ENCODE measurements at regions of chr4 and their contacts with region 1.

Region 1: DNA sequence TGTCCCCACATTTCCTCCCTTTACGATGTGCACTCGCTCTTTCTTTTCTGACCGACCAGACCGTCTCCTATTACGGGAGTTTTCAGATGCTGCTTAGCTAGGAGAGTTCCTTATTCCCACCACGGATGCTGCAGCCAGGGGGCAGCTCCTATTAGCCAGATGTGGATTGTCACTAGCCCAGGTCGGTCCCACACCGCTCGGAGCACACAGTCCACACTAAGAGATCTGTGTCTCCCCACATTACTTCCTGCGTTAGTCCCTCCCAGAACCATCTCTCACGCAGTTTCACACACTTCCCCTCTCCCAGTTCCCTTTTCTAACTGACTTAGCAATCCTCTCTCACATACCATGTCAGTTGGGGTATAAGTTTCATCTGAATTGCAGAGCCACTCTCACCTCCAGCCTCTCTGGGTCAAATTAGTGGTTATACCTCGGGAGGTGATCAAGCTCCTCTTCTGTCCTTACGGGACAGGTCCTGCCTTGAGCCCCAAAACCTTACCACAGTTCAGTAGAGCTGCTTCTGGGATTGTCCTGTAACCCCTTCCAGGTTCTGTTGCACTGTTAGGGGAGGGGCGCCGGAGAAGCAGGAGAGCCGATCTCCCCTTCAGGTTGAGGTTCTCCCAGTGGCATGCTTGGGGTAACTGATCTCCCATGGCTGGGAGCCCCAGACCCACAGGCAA is 28.2 kb downstream of the SULT1E1 start:
- DNase-seq: no peak
- H3K4me3 Mint-ChIP-seq: peak overlapping the region; percentile 85
- H3K27ac Mint-ChIP-seq: peak overlapping the region; percentile 52
- H3K4me1 Mint-ChIP-seq: peaks cover 9% of the 10 kb centered on the region
- H3K27me3 Mint-ChIP-seq: no peaks in the 10 kb centered on the region

Region 2: DNA sequence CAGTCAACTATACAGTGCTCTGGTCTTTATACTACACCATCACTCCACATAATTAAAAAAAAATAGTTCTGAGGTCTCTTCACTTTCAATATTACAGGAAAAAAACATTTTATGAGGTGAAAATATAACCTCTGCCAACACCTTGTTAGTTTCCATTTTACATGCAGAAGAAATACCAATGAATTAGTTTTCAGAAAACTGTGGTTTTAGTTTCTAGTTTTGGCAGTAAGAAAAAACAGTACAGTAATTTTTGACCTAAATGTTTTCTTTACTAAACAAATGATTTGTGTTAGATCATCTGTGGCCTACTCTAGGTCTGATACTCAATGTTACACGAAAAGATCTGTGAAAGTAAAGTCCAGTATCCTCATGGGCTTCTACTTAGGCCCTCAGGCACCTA is 18.2 kb after region 1 on chr4:
- intact Hi-C with region 1: loop called (anchors 2 kb)
- DNase-seq: no peak
- H3K4me3 Mint-ChIP-seq: no peak overlapping the region
- H3K27ac Mint-ChIP-seq: no peak overlapping the region
- H3K4me1 Mint-ChIP-seq: no peaks in the 10 kb centered on the region
- H3K27me3 Mint-ChIP-seq: peaks cover 2% of the 10 kb centered on the region

Region 3: DNA sequence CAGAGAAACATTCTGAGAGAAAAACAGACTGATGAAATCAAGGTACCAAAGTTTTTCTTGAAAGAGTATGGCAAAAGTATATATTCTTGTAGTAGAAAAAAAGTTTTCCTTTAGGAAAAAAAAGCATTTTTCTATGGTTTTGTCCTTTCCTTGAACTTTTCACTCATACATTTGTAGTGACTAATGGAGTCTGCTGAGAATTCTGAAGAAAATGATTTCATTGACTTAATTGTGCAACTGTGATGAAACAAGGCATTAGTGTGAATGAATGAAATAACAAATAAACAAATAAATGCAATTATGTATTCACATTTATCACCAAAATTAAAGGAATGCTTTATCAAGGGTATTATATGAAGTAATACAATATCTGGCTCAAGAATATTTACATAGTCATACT is 104.8 kb after region 1 on chr4:
- intact Hi-C with region 1: no loop called
- DNase-seq: no peak
- H3K4me3 Mint-ChIP-seq: no peak overlapping the region
- H3K27ac Mint-ChIP-seq: no peak overlapping the region
- H3K4me1 Mint-ChIP-seq: no peaks in the 10 kb centered on the region
- H3K27me3 Mint-ChIP-seq: no peaks in the 10 kb centered on the region